ENCODE measurements at regions of chr17 and their contacts with region 1.

Region 1: GRCh38 chr17:28951991-28952975 is 965 bp upstream of the PHF12 start:
- DNase-seq: peak; percentile 94 to 99 (median 99)
- H3K4me3 ChIP-seq: peak overlapping the region; percentile 86 to 92
- H3K4me3 Mint-ChIP-seq: no peak overlapping the region
- H3K27ac ChIP-seq: peak overlapping the region; percentile 86
- H3K27ac Mint-ChIP-seq: no peak overlapping the region
- H3K4me1 ChIP-seq: peaks cover 29% of the 10 kb centered on the region
- H3K4me1 Mint-ChIP-seq: peaks cover 12 to 20% (median 18%) of the 10 kb centered on the region in 4 donors
- H3K27me3 ChIP-seq: no peaks in the 10 kb centered on the region
- H3K27me3 Mint-ChIP-seq: no peaks in the 10 kb centered on the region

Region 2: GRCh38 chr17:28661635-28662537 is 290.4 kb before region 1 on chr17 and contains the starts of genes SDF2 and SUPT6H:
- CTCF ChIA-PET with region 1: no interaction called
- POLR2A ChIA-PET with region 1: interaction called, 7 read pairs
- intact Hi-C with region 1: loop called (anchors 5 kb)
- DNase-seq: peak; percentile 94 to 96 (median 95)
- H3K4me3 ChIP-seq: peak within 1 kb of the TSS; percentile 92 to 99
- H3K4me3 Mint-ChIP-seq: peak within 1 kb of the TSS; percentile 99 to 100 (median 100)
- H3K27ac ChIP-seq: peak within 1 kb of the TSS; percentile 99
- H3K27ac Mint-ChIP-seq: peak within 1 kb of the TSS; percentile 97 to 100 (median 100)
- H3K4me1 ChIP-seq: peaks cover 51% of the 10 kb centered on the region
- H3K4me1 Mint-ChIP-seq: peaks cover 42 to 68% (median 56%) of the 10 kb centered on the region in 4 donors
- H3K27me3 ChIP-seq: no peaks in the 10 kb centered on the region
- H3K27me3 Mint-ChIP-seq: no peaks in the 10 kb centered on the region
- total RNA-seq, gene SDF2: 41.5 to 48.1 TPM
- total RNA-seq, gene SUPT6H: 96.5 to 102 TPM

Region 3: GRCh38 chr17:28743225-28744103 is 208.8 kb before region 1 on chr17 and contains the start of gene TRAF4:
- CTCF ChIA-PET with region 1: no interaction called
- POLR2A ChIA-PET with region 1: interaction called, 13 read pairs
- intact Hi-C with region 1: no loop called
- DNase-seq: peak; percentile 70 to 78 (median 75)
- H3K4me3 ChIP-seq: peak within 1 kb of the TSS; percentile 64 to 81
- H3K4me3 Mint-ChIP-seq: peak within 1 kb of the TSS; percentile 87 to 92 (median 90)
- H3K27ac ChIP-seq: peak within 1 kb of the TSS; percentile 67
- H3K27ac Mint-ChIP-seq: peak within 1 kb of the TSS; percentile 90 to 98 (median 96)
- H3K4me1 ChIP-seq: peaks cover 35% of the 10 kb centered on the region
- H3K4me1 Mint-ChIP-seq: peaks cover 12 to 36% (median 22%) of the 10 kb centered on the region in 4 donors
- H3K27me3 ChIP-seq: no peaks in the 10 kb centered on the region
- H3K27me3 Mint-ChIP-seq: no peaks in the 10 kb centered on the region
- total RNA-seq, gene TRAF4: 31.2 to 32.9 TPM

Region 4: GRCh38 chr17:28842282-28843012 is 109.8 kb before region 1 on chr17 and contains the start of gene FAM222B:
- CTCF ChIA-PET with region 1: interaction called, 7 read pairs
- POLR2A ChIA-PET with region 1: interaction called, 12 read pairs
- intact Hi-C with region 1: loop called (anchors 2 kb)
- DNase-seq: peak; percentile 85 to 87 (median 87)
- H3K4me3 ChIP-seq: peak within 1 kb of the TSS; percentile 55 to 87
- H3K4me3 Mint-ChIP-seq: peak within 1 kb of the TSS; percentile 93 to 100 (median 98)
- H3K27ac ChIP-seq: peak within 1 kb of the TSS; percentile 84
- H3K27ac Mint-ChIP-seq: peak within 1 kb of the TSS; percentile 93 to 99 (median 98)
- H3K4me1 ChIP-seq: peaks cover 25% of the 10 kb centered on the region
- H3K4me1 Mint-ChIP-seq: peaks cover 15 to 26% (median 21%) of the 10 kb centered on the region in 4 donors
- H3K27me3 ChIP-seq: no peaks in the 10 kb centered on the region
- H3K27me3 Mint-ChIP-seq: no peaks in the 10 kb centered on the region
- total RNA-seq, gene FAM222B: 19.0 to 23.0 TPM

Region 5: GRCh38 chr17:28902819-28903545 is 49.3 kb before region 1 on chr17 and contains the start of gene DHRS13:
- CTCF ChIA-PET with region 1: interaction called, 31 read pairs
- POLR2A ChIA-PET with region 1: interaction called, 193 read pairs
- intact Hi-C with region 1: loop called (anchors 1 kb)
- DNase-seq: peak; percentile 93 to 98 (median 96)
- H3K4me3 ChIP-seq: peak within 1 kb of the TSS; percentile 77 to 95
- H3K4me3 Mint-ChIP-seq: peak within 1 kb of the TSS; percentile 83 to 97 (median 90)
- H3K27ac ChIP-seq: peak within 1 kb of the TSS; percentile 76
- H3K27ac Mint-ChIP-seq: peak within 1 kb of the TSS; percentile 89 to 97 (median 93)
- H3K4me1 ChIP-seq: peaks cover 35% of the 10 kb centered on the region
- H3K4me1 Mint-ChIP-seq: peaks cover 31 to 50% (median 37%) of the 10 kb centered on the region in 4 donors
- H3K27me3 ChIP-seq: no peaks in the 10 kb centered on the region
- H3K27me3 Mint-ChIP-seq: no peaks in the 10 kb centered on the region
- total RNA-seq, gene DHRS13: 44.6 to 49.6 TPM

Region 6: DNA sequence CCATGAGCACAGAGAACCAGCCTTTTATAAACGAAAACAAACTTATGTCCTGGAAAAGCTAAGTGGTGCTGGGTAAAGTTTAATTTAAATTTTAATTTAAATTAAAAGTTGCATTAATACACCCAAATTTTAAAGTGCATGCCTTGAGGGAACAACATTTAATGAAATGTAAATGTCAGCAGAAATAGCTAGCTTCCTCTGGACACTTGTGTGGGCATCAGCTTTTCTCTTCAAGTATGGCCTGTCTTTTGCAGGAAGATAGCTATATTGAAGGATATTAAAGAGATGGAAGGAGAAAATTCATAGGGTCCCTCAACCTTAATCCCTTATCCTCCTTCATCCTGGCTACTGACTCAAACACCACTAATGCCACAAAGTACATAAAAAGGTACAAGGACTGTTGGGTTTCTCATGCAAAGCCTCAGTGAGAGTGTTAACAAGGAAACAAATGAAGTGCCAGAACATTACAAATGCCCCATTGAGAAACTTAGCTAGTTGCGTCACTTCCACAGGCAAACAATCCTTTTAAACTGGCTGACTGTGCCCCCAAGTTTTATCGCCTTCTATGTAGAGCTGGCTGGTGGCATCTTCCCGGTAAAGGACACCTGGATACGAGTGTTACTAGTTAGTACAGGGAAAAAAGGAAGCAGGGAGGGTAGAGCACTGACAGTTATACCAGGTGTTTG is 15.1 kb before region 1 on chr17:
- CTCF ChIA-PET with region 1: interaction called, 14 read pairs
- POLR2A ChIA-PET with region 1: interaction called, 134 read pairs
- intact Hi-C with region 1: no loop called
- DNase-seq: no peak
- H3K4me3 ChIP-seq: no peak overlapping the region
- H3K4me3 Mint-ChIP-seq: peak overlapping the region in 2 of 8 donors; percentile 6
- H3K27ac ChIP-seq: no peak overlapping the region
- H3K27ac Mint-ChIP-seq: peak overlapping the region in 5 of 7 donors; percentile 8 to 81 (median 42)
- H3K4me1 ChIP-seq: peaks cover 77% of the 10 kb centered on the region
- H3K4me1 Mint-ChIP-seq: peaks cover 52 to 95% (median 72%) of the 10 kb centered on the region in 4 donors
- H3K27me3 ChIP-seq: no peaks in the 10 kb centered on the region
- H3K27me3 Mint-ChIP-seq: no peaks in the 10 kb centered on the region